ENCODE measurements at regions of chr20 and their contacts with region 1.

Region 1: GRCh38 chr20:49186535-49187329 is 1.4 kb downstream of the STAU1 start:
- DNase-seq: peak; percentile 60 to 83 (median 68)
- H3K4me3 ChIP-seq: peak overlapping the region; percentile 49 to 82
- H3K4me3 Mint-ChIP-seq: peak overlapping the region; percentile 84 to 96 (median 90)
- H3K27ac ChIP-seq: peak overlapping the region; percentile 75
- H3K27ac Mint-ChIP-seq: peak overlapping the region; percentile 77 to 95 (median 93)
- H3K4me1 ChIP-seq: peaks cover 50% of the 10 kb centered on the region
- H3K4me1 Mint-ChIP-seq: peaks cover 35 to 59% (median 47%) of the 10 kb centered on the region in 4 donors
- H3K27me3 ChIP-seq: no peaks in the 10 kb centered on the region
- H3K27me3 Mint-ChIP-seq: peaks cover 0 to 2% of the 10 kb centered on the region in 2 donors

Region 2: GRCh38 chr20:49046087-49046900 is 140.4 kb before region 1 on chr20 and contains the start of gene CSE1L:
- CTCF ChIA-PET with region 1: no interaction called
- POLR2A ChIA-PET with region 1: no interaction called
- intact Hi-C with region 1: loop called (anchors 1 kb)
- DNase-seq: peak; percentile 93 to 97 (median 94)
- H3K4me3 ChIP-seq: peak within 1 kb of the TSS; percentile 99 to 100
- H3K4me3 Mint-ChIP-seq: peak within 1 kb of the TSS; percentile 97 to 99 (median 98)
- H3K27ac ChIP-seq: peak within 1 kb of the TSS; percentile 87
- H3K27ac Mint-ChIP-seq: peak within 1 kb of the TSS; percentile 98 to 99 (median 99)
- H3K4me1 ChIP-seq: peaks cover 40% of the 10 kb centered on the region
- H3K4me1 Mint-ChIP-seq: peaks cover 24 to 49% (median 38%) of the 10 kb centered on the region in 4 donors
- H3K27me3 ChIP-seq: no peaks in the 10 kb centered on the region
- H3K27me3 Mint-ChIP-seq: no peaks in the 10 kb centered on the region
- total RNA-seq, gene CSE1L: 44.5 to 45.8 TPM

Region 3: GRCh38 chr20:49132995-49133478 is 53.7 kb before region 1 on chr20:
- CTCF ChIA-PET with region 1: interaction called, 23 read pairs
- POLR2A ChIA-PET with region 1: interaction called, 11 read pairs
- intact Hi-C with region 1: loop called (anchors 2 kb)
- DNase-seq: peak in 4 of 5 donors; percentile 58 to 61 (median 60)
- H3K4me3 ChIP-seq: no peak overlapping the region
- H3K4me3 Mint-ChIP-seq: no peak overlapping the region
- H3K27ac ChIP-seq: no peak overlapping the region
- H3K27ac Mint-ChIP-seq: peak overlapping the region in 6 of 7 donors; percentile 1 to 71 (median 38)
- H3K4me1 ChIP-seq: no peaks in the 10 kb centered on the region
- H3K4me1 Mint-ChIP-seq: peaks cover 5 to 15% (median 8%) of the 10 kb centered on the region in 4 donors
- H3K27me3 ChIP-seq: no peaks in the 10 kb centered on the region
- H3K27me3 Mint-ChIP-seq: no peaks in the 10 kb centered on the region

Region 4: DNA sequence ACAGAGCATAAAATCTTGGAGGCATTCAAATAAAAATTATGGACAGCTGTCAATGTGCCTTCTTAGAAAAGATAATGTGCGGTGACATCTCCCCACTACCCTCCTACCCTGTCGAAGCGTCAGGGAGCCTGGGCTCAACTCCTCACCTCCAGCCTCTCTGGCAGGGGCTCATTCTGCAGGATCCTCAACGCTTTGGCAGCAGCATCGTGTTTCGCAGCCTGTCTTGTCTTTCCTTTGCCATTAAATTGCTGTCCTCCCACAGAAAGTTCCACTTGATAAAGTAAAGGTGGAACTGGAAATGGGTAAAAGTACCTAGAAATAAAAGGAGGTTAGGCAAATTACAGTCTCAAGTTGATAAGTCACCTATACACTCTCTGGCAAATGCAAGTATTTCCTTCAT is 35.3 kb before region 1 on chr20:
- CTCF ChIA-PET with region 1: no interaction called
- POLR2A ChIA-PET with region 1: no interaction called
- intact Hi-C with region 1: loop called (anchors 5 kb)
- DNase-seq: no peak
- H3K4me3 ChIP-seq: no peak overlapping the region
- H3K4me3 Mint-ChIP-seq: no peak overlapping the region
- H3K27ac ChIP-seq: no peak overlapping the region
- H3K27ac Mint-ChIP-seq: peak overlapping the region in 2 of 7 donors; percentile 29 to 86
- H3K4me1 ChIP-seq: no peaks in the 10 kb centered on the region
- H3K4me1 Mint-ChIP-seq: peaks cover 8 to 37% (median 13%) of the 10 kb centered on the region in 4 donors
- H3K27me3 ChIP-seq: no peaks in the 10 kb centered on the region
- H3K27me3 Mint-ChIP-seq: no peaks in the 10 kb centered on the region

Region 5: DNA sequence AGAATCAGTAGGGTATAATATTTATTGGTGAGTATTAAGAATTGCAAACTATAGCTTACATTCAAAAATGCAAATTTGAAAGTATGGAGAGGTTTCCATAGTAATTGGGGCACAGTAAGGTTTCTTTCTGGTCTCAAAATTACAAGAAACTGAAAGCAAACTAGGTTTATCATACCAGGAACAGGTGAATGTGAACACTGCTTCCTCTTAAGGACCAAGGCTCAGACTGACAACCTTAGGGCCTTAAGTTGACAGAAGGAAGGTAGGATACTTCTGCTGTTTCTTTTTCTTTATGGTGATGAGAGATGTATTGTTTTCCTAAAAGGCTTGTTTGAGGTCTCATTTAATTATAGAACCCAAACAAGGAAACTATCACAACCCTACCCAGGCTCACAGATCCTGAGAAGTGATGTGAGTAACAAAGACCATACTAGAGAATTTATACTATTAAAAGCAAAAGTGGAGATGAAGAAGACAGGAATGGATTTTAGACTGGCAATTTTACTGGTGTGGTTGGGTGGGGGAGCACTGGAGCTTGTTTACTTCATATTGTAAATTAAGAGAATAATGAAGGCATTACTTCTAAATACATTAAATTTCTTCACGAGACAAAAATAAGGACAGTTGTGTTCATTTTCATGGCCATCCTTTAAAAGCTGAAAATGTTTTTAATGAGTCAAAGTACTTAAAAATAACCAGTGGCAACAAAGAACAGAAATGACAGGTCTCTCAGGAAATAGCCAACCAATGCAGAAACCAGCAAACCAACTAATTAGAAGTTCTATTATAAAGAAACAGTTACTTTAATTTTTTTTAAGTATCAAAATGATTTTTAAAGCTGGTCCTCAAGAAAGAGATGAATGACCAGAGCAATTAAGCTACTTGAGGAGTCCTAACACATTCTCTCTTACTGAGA is 19.9 kb before region 1 on chr20:
- CTCF ChIA-PET with region 1: interaction called, 12 read pairs
- POLR2A ChIA-PET with region 1: interaction called, 11 read pairs
- intact Hi-C with region 1: no loop called
- DNase-seq: no peak
- H3K4me3 ChIP-seq: no peak overlapping the region
- H3K4me3 Mint-ChIP-seq: peak overlapping the region in 7 of 8 donors; percentile 1 to 60 (median 27)
- H3K27ac ChIP-seq: no peak overlapping the region
- H3K27ac Mint-ChIP-seq: peak overlapping the region; percentile 17 to 88 (median 61)
- H3K4me1 ChIP-seq: peaks cover 56% of the 10 kb centered on the region
- H3K4me1 Mint-ChIP-seq: peaks cover 37 to 67% (median 53%) of the 10 kb centered on the region in 4 donors
- H3K27me3 ChIP-seq: no peaks in the 10 kb centered on the region
- H3K27me3 Mint-ChIP-seq: no peaks in the 10 kb centered on the region

Region 6: GRCh38 chr20:49247792-49248191 is 61.1 kb after region 1 on chr20:
- CTCF ChIA-PET with region 1: no interaction called
- POLR2A ChIA-PET with region 1: no interaction called
- intact Hi-C with region 1: no loop called
- DNase-seq: no peak
- H3K4me3 ChIP-seq: no peak overlapping the region
- H3K4me3 Mint-ChIP-seq: no peak overlapping the region
- H3K27ac ChIP-seq: no peak overlapping the region
- H3K27ac Mint-ChIP-seq: peak overlapping the region in 5 of 7 donors; percentile 1 to 71 (median 48)
- H3K4me1 ChIP-seq: no peaks in the 10 kb centered on the region
- H3K4me1 Mint-ChIP-seq: peaks cover 5 to 8% (median 7%) of the 10 kb centered on the region in 4 donors
- H3K27me3 ChIP-seq: no peaks in the 10 kb centered on the region
- H3K27me3 Mint-ChIP-seq: no peaks in the 10 kb centered on the region

Measured in CD4-positive, alpha-beta memory T cell (primary cell).